ENCODE measurements at regions of chr3 and their contacts with region 1.

Region 1: DNA sequence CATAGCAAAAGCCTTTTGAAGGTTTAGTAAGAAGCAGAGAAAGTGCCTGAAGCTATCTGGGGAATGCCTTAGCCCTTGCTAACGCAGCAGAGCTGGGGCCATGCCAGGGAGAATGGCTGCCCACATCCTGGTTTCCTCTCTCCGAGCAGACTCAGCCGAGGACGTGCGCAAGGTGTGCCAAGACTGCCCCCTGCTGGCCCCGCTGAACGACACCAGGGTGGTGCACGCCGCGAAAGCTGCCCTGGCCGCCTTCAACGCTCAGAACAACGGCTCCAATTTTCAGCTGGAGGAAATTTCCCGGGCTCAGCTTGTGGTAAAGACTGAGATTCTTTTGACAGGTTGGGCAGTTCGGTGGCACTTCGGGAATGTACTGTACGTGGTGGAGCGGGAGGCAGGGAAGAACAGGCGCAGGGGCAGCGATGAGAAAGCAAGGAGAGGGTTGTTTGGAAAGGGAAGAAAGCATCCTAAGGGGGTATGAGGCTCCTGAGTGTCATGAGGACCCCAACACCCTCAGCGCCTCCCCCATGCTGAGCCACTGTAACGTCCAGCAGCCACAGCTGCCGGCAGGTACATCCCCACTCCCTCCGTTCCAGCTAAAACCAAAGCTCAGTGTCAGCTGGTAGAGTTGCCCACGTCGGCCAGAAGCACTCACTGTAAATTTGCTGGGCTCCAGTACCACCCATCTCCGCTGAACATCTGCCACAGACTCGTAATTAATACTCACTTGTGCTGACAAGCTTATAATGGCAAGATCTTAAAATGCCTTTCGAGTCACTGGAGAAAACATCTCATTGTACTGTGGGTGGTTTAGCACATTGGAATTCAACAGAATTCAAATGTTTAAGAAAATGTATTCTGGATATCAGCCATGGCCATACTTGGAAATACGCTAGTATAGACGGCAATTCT is 4.4 kb downstream of the AHSG start:
- DNase-seq: peak; percentile 93
- H3K4me3 ChIP-seq: peak overlapping the region; percentile 34
- H3K27ac ChIP-seq: no peak overlapping the region
- H3K4me1 ChIP-seq: peaks cover 35% of the 10 kb centered on the region
- H3K27me3 ChIP-seq: no peaks in the 10 kb centered on the region
- CTCF ChIP-seq: peak; percentile 99

Region 2: GRCh38 chr3:186108941-186109865 is 508.1 kb before region 1 on chr3 and contains the start of gene ETV5:
- CTCF ChIA-PET with region 1: no interaction called
- POLR2A ChIA-PET with region 1: interaction called, 10 read pairs
- intact Hi-C with region 1: no loop called
- DNase-seq: peak; percentile 100
- H3K4me3 ChIP-seq: peak within 1 kb of the TSS; percentile 70
- H3K27ac ChIP-seq: peak within 1 kb of the TSS; percentile 89
- H3K4me1 ChIP-seq: peaks cover 35% of the 10 kb centered on the region
- H3K27me3 ChIP-seq: no peaks in the 10 kb centered on the region
- CTCF ChIP-seq: no peak
- total RNA-seq, gene ETV5: 87.4 and 92.9 TPM in 2 replicates

Region 3: GRCh38 chr3:186138272-186138981 is 478.9 kb before region 1 on chr3:
- CTCF ChIA-PET with region 1: no interaction called
- POLR2A ChIA-PET with region 1: no interaction called
- intact Hi-C with region 1: no loop called
- DNase-seq: no peak
- H3K4me3 ChIP-seq: no peak overlapping the region
- H3K27ac ChIP-seq: no peak overlapping the region
- H3K4me1 ChIP-seq: no peaks in the 10 kb centered on the region
- H3K27me3 ChIP-seq: no peaks in the 10 kb centered on the region
- CTCF ChIP-seq: no peak

Region 4: DNA sequence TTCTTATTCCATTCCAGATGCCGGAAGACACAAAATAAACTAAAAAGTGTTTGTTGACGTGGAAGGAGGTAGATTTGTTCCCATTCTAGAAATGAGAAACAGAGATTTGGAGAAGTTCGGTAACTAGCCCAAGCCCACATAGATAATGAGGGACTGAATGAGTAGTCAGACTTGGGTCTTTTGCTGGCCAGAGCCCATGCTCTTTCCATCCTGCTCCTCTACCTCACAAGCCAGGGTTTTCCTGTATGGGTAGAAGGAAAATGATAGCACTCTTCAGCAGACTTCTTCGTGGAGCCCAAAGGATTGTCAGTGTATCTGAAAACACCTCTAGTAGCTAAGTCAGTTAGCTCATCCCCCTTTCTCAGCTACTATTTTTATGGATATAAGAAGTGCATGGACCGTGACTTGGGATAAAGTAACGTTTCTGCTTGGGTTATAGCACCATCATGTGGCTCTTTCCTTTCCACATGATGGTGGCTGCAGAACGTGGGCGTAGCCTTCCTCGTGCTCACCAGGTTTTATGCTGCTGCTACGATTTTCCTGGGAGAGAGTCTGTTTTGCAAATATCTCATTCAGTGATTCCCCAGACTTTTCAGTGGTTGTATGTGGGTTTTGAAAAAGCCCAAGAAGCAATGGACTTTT is 339.9 kb before region 1 on chr3:
- CTCF ChIA-PET with region 1: no interaction called
- POLR2A ChIA-PET with region 1: no interaction called
- intact Hi-C with region 1: loop called (anchors 5 kb)
- DNase-seq: peak; percentile 83
- H3K4me3 ChIP-seq: no peak overlapping the region
- H3K27ac ChIP-seq: no peak overlapping the region
- H3K4me1 ChIP-seq: no peaks in the 10 kb centered on the region
- H3K27me3 ChIP-seq: no peaks in the 10 kb centered on the region
- CTCF ChIP-seq: peak; percentile 82

Region 5: DNA sequence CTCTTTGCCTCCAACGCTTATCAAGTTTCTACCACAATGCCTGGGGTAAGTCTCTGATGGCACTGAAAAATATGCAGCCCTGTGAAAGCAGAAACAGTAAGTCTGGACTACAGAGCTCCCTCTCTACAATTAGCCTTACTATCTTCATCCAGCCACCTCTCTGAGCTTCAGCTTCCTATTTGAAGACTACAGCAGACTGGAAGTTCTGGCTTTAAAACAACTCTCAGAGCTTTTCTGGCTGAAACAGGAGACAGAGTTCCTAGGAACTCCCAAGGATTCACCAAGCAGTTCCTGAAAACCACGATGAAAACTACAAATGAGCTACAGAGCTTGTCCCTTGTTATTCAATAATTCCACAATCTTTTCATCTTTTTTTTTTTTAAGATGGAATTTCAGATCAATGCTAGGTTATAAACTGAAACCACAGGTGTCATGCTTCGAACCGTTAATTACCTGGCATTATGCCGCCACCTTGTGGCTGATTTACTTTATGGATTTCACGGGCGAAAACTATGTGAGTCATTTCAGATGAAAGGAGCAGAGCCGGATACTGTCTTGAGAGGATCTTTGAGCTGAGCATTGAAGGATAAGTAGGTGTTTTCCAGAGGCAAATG is 77.0 kb before region 1 on chr3:
- CTCF ChIA-PET with region 1: interaction called, 12 read pairs
- POLR2A ChIA-PET with region 1: no interaction called
- intact Hi-C with region 1: no loop called
- DNase-seq: peak; percentile 86
- H3K4me3 ChIP-seq: no peak overlapping the region
- H3K27ac ChIP-seq: no peak overlapping the region
- H3K4me1 ChIP-seq: peaks cover 9% of the 10 kb centered on the region
- H3K27me3 ChIP-seq: no peaks in the 10 kb centered on the region
- CTCF ChIP-seq: peak; percentile 86

Region 6: GRCh38 chr3:186589121-186589520 is 28.2 kb before region 1 on chr3:
- CTCF ChIA-PET with region 1: interaction called, 11 read pairs
- POLR2A ChIA-PET with region 1: no interaction called
- intact Hi-C with region 1: loop called (anchors 2 kb)
- DNase-seq: peak; percentile 50
- H3K4me3 ChIP-seq: no peak overlapping the region
- H3K27ac ChIP-seq: no peak overlapping the region
- H3K4me1 ChIP-seq: no peaks in the 10 kb centered on the region
- H3K27me3 ChIP-seq: no peaks in the 10 kb centered on the region
- CTCF ChIP-seq: peak; percentile 68

Region 7: DNA sequence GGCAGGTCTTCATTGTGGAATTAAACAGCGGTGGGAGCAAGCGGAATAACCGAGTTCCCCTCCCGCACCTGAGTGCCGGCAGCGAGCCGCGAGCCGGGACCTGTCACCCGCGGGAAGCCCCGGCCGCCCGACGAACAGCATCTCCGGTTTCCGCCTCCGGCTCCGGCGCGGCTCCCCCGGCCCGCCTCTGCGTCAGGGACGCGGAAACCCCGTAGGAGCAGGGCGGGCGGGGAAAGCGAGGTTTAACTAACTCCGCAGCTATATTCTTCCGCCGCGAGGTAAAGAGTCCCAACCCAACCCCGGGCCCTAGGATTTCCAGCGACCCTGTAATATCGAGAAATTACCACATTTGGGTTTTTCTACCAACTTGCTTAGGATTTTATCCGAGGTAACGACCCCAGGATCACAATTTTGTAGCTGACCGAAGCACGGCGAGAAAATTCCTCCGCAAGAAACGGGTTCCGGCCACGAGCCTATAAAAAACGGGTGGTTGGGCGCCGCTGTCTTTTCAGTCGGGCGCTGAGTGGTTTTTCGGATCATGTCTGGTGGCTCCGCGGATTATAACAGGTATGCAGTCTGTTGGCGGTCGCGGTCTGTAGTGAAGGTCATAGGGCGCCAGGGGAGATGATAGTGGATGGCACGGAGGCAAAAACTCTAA is 165.9 kb after region 1 on chr3 and contains the start of gene EIF4A2:
- CTCF ChIA-PET with region 1: no interaction called
- POLR2A ChIA-PET with region 1: no interaction called
- intact Hi-C with region 1: loop called (anchors 10 kb)
- DNase-seq: peak; percentile 95
- H3K4me3 ChIP-seq: peak within 1 kb of the TSS; percentile 77
- H3K27ac ChIP-seq: peak within 1 kb of the TSS; percentile 98
- H3K4me1 ChIP-seq: peaks cover 21% of the 10 kb centered on the region
- H3K27me3 ChIP-seq: no peaks in the 10 kb centered on the region
- CTCF ChIP-seq: no peak
- total RNA-seq, gene EIF4A2: 403 and 435 TPM in 2 replicates

Region 8: DNA sequence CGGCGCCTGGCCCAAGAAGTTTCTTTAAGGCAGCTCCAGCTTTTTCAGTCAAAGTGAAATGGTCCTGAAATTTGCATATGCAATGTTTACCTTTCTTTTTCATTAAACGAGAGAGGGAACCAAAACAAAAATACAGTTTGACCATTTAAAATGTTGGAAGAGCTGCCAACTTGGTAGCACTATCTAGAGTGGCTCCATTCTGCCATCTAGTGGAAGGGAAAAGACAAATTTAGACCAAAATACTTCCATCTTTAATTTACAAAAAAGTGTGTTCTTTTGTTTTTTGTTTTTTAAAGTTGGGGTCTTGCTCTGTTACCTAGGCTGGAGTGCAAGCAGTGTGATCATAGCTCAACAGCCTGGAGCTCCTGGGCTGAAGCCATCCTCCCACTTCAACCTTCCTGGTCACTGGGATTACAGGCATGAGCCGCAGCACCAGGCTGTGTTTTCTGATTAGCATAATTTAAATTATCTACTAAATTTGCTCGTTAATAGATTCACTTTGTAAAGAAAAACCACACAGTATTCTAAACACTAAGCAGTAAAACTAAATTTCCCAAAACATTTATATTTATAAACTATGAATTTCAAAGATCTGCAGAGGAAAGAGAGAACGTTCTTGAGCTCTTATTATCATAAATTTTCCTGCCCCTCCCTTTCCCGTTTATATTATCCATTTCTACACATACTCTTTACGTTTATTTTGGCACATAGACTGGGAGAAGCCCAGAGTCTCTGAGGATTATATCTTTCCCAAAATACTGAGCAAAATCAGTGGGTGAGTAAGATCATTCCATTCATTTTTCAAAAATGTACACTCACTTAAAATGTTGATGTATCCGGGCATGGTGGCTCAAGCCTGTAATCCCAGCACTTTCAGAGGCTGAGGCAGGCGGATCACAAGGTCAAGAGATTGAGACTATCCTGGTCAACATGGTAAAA is 204.4 kb after region 1 on chr3:
- CTCF ChIA-PET with region 1: interaction called, 4 read pairs
- POLR2A ChIA-PET with region 1: no interaction called
- intact Hi-C with region 1: loop called (anchors 2 kb)
- DNase-seq: peak; percentile 76
- H3K4me3 ChIP-seq: no peak overlapping the region
- H3K27ac ChIP-seq: no peak overlapping the region
- H3K4me1 ChIP-seq: peaks cover 18% of the 10 kb centered on the region
- H3K27me3 ChIP-seq: no peaks in the 10 kb centered on the region
- CTCF ChIP-seq: peak; percentile 75

Region 9: DNA sequence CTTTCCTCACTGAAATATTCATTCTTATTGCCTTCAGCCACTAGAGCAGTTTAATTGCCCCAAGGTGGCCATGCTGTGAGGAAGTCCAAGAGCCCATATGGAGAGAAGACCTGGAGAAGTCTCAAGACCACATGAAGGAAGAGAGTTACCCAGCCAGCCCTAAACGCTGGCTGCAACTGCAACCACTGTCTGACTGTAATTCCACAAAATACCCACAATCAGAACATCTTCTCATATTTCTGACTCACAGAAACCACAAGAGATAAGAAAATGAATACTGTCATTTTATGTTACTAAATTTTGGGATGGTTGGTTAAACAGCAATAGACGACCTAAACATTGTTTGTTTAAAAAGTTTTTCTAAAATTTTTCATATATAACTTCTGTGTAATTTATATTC is 1067.6 kb after region 1 on chr3:
- CTCF ChIA-PET with region 1: no interaction called
- POLR2A ChIA-PET with region 1: no interaction called
- intact Hi-C with region 1: no loop called
- DNase-seq: no peak
- H3K4me3 ChIP-seq: no peak overlapping the region
- H3K27ac ChIP-seq: no peak overlapping the region
- H3K4me1 ChIP-seq: no peaks in the 10 kb centered on the region
- H3K27me3 ChIP-seq: no peaks in the 10 kb centered on the region
- CTCF ChIP-seq: no peak

Measured in A673 (cell line).